ENCODE measurements at regions of chr5 and their contacts with region 1.

Region 1: DNA sequence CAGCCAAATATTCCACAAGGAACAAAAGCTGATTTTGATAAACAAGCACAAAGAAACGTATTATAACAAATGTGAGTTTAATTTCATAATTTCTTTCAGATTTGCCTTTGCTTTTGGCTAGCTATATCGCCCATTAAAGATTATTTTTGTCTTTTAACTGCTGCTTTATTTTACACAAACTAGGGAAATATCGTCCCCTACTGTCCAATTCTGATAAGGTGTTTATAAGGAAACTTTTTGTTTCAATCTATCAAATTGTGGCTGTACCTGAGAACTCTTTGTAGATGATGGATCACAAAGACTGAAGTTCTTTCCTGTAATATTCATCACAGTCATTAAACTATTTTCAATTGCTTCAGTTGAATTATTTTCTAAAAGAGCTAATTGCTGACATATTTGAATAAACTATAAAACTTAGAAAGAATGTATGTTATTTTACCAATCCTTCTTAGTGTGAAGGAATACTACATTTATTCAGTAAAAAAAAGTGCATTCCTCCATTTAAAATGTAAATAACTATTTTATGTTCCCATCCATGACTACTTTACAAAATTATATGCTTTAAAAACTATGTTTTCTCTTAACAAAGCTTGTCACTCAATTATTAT is 431.3 kb upstream of the ITGA1 start:
- DNase-seq: peak; percentile 25
- H3K4me3 ChIP-seq: no peak overlapping the region
- H3K27ac ChIP-seq: peak overlapping the region in 1 of 2 experiments; percentile 87; a peak in 2 of 4 replicates
- H3K4me1 ChIP-seq: peaks cover 0 to 7% of the 10 kb centered on the region in 2 experiments; a peak in 3 of 4 replicates
- H3K27me3 ChIP-seq: no peaks in the 10 kb centered on the region
- CTCF ChIP-seq: peak; percentile 80
- EP300 ChIP-seq: no peak; a peak in 1 of 4 replicates
- RAD21 ChIP-seq: peak; percentile 89

Region 2: GRCh38 chr5:52007230-52007858 is 349.1 kb before region 1 on chr5:
- CTCF ChIA-PET with region 1: interaction called, 20 read pairs
- POLR2A ChIA-PET with region 1: no interaction called
- DNase-seq: peak; percentile 44
- H3K4me3 ChIP-seq: peak overlapping the region in 1 of 2 experiments; percentile 21; a peak in 1 of 4 replicates
- H3K27ac ChIP-seq: peak overlapping the region in 1 of 2 experiments; percentile 94; a peak in 2 of 4 replicates
- H3K4me1 ChIP-seq: peaks cover 0 to 3% of the 10 kb centered on the region in 2 experiments; a peak in 1 of 4 replicates
- H3K27me3 ChIP-seq: no peaks in the 10 kb centered on the region
- CTCF ChIP-seq: peak; percentile 89
- EP300 ChIP-seq: 0 out of 4 replicates have a peak, but pooled peaks of 1 of the 2 experiments have one; percentile 23
- RAD21 ChIP-seq: peak; percentile 98

Region 3: DNA sequence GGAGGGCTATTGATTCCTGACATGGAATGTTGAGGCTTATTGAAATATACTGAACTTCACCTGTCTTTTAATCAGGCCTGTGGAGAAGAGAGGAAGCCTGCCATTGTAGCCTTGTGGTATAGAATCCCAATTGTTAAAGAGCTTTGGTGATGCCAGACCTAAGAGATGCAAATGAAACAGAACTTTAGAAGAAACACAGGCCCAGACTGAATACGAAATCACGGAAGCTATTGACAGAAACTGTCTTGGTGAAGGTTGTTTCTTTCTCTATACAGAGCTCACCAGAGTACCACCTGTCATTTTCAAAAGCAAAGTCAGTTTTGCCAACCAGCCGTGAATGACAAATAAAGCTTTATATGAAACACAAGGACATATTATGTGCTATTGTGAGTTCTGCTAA is 312.9 kb before region 1 on chr5:
- CTCF ChIA-PET with region 1: no interaction called
- POLR2A ChIA-PET with region 1: no interaction called
- DNase-seq: no peak
- H3K4me3 ChIP-seq: no peak overlapping the region
- H3K27ac ChIP-seq: no peak overlapping the region; a peak in 1 of 4 replicates
- H3K4me1 ChIP-seq: no peaks in the 10 kb centered on the region; a peak in 1 of 4 replicates
- H3K27me3 ChIP-seq: no peaks in the 10 kb centered on the region
- CTCF ChIP-seq: no peak
- EP300 ChIP-seq: no peak
- RAD21 ChIP-seq: no peak

Region 4: DNA sequence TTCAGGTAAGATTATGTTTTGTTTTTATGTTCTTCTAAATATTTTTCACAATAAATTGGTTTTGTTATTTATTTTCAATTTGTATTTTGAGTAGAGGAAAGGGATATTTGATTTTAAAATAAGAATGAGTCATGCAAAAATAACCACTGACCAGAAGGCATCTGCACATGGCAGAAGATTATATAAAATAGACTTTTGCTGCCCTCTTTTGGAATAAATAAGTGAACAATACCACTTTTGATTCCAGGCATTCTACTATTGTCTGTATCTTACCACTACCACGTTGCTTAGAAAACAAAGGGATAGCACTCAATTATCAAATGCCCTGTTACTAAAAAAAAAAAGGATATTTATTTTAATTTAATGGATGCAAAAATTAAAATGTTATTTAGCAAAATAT is 204.0 kb after region 1 on chr5:
- CTCF ChIA-PET with region 1: interaction called, 10 read pairs
- POLR2A ChIA-PET with region 1: no interaction called
- DNase-seq: peak; percentile 11
- H3K4me3 ChIP-seq: no peak overlapping the region
- H3K27ac ChIP-seq: peak overlapping the region in 1 of 2 experiments; percentile 100; a peak in 2 of 4 replicates
- H3K4me1 ChIP-seq: peaks cover 0 to 31% of the 10 kb centered on the region in 2 experiments; a peak in 3 of 4 replicates
- H3K27me3 ChIP-seq: no peaks in the 10 kb centered on the region
- CTCF ChIP-seq: peak; percentile 36
- EP300 ChIP-seq: no peak
- RAD21 ChIP-seq: peak; percentile 82

Region 5: GRCh38 chr5:52657247-52657645 is 300.8 kb after region 1 on chr5:
- CTCF ChIA-PET with region 1: interaction called, 12 read pairs
- POLR2A ChIA-PET with region 1: no interaction called
- DNase-seq: peak; percentile 12
- H3K4me3 ChIP-seq: peak overlapping the region in 1 of 2 experiments; percentile 34; a peak in 1 of 4 replicates
- H3K27ac ChIP-seq: peak overlapping the region in 1 of 2 experiments; percentile 97; a peak in 2 of 4 replicates
- H3K4me1 ChIP-seq: peaks cover 7 to 19% of the 10 kb centered on the region in 2 experiments; a peak in 3 of 4 replicates
- H3K27me3 ChIP-seq: no peaks in the 10 kb centered on the region
- CTCF ChIP-seq: peak; percentile 69
- EP300 ChIP-seq: peak in 1 of 2 experiments; percentile 52; a peak in 1 of 4 replicates
- RAD21 ChIP-seq: peak; percentile 83

Measured in SK-N-SH (cell line).